Breast epithelium (tissue), 4 donors: ENCODE measurements at regions of chr12 and their contacts with region 1.

Region 1: DNA sequence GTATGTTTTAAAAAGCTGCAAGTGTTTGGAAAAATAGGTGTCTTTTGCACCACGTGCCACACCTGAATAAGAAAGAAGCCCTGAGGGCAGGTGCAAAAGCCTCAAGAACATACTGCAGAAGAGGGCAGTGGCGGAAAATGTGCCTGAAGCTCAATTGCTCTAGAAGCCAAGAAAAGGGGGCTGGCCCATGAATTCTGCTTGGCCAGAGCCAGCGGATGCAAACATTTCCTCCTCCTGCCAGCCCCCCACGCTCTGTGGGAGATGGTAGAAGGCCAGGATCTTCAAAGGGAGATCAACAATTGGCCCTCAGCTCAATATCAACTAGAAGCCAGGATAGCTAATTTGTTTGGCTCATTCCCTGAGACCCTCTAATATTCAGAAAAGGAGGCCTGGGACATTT is 80.3 kb upstream of the TMEM132D start:
- DNase-seq: no peak
- H3K4me3 ChIP-seq: no peak overlapping the region
- H3K27ac ChIP-seq: no peak overlapping the region
- H3K4me1 ChIP-seq: no peaks in the 10 kb centered on the region
- H3K27me3 ChIP-seq: peaks cover 0 to 11% of the 10 kb centered on the region in 2 donors
- CTCF ChIP-seq: no peak
- POLR2A ChIP-seq: no peak

Region 2: GRCh38 chr12:129570796-129571400 is 413.2 kb before region 1 on chr12:
- intact Hi-C with region 1: loop called (anchors 5 kb)
- DNase-seq: no peak
- H3K4me3 ChIP-seq: no peak overlapping the region
- H3K27ac ChIP-seq: no peak overlapping the region
- H3K4me1 ChIP-seq: no peaks in the 10 kb centered on the region
- H3K27me3 ChIP-seq: no peaks in the 10 kb centered on the region
- CTCF ChIP-seq: no peak
- POLR2A ChIP-seq: no peak

Region 3: DNA sequence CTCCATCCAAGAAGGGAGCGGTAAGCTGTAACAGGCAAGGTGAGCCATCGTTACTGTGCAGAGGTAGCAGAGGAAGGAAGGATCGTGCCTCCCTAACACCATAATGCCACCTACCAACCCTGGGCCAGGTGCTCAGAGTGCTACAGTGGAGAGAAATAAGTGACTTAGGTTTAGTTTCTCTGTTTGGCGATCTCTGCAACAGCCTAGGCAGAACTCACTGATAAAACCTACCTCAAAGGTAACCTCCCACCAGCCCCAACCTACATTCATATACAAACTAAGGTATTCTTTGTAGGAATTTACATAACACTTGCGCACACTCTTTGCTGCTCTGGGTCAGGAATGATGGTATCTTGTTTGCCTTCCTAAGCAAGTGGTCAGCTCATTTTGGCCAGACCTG is 13.1 kb after region 1 on chr12:
- intact Hi-C with region 1: no loop called
- DNase-seq: no peak
- H3K4me3 ChIP-seq: no peak overlapping the region
- H3K27ac ChIP-seq: no peak overlapping the region
- H3K4me1 ChIP-seq: no peaks in the 10 kb centered on the region
- H3K27me3 ChIP-seq: no peaks in the 10 kb centered on the region
- CTCF ChIP-seq: no peak
- POLR2A ChIP-seq: no peak

Region 4: GRCh38 chr12:130617219-130617618 is 633.1 kb after region 1 on chr12:
- intact Hi-C with region 1: no loop called
- DNase-seq: no peak
- H3K4me3 ChIP-seq: no peak overlapping the region
- H3K27ac ChIP-seq: no peak overlapping the region
- H3K4me1 ChIP-seq: no peaks in the 10 kb centered on the region
- H3K27me3 ChIP-seq: no peaks in the 10 kb centered on the region
- CTCF ChIP-seq: no peak
- POLR2A ChIP-seq: no peak